K562 (cell line): ENCODE measurements at regions of chrX and their contacts with region 1.

Region 1: GRCh38 chrX:149539283-149540130 is 1.3 kb upstream of the EOLA1 start:
- DNase-seq: peak; percentile 77 to 93 (median 84)
- ATAC-seq: peak; percentile 85
- H3K4me3 ChIP-seq: peak overlapping the region; percentile 58
- H3K27ac ChIP-seq: no peak overlapping the region; the same call in 2 of the 3 replicates
- H3K4me1 ChIP-seq: peaks cover 8 to 16% of the 10 kb centered on the region in 2 experiments; a peak in 4 of 5 replicates
- H3K27me3 ChIP-seq: no peaks in the 10 kb centered on the region
- CTCF ChIP-seq: no peak
- EP300 ChIP-seq: no peak
- POLR2A ChIP-seq: no peak
- RAD21 ChIP-seq: no peak

Region 2: DNA sequence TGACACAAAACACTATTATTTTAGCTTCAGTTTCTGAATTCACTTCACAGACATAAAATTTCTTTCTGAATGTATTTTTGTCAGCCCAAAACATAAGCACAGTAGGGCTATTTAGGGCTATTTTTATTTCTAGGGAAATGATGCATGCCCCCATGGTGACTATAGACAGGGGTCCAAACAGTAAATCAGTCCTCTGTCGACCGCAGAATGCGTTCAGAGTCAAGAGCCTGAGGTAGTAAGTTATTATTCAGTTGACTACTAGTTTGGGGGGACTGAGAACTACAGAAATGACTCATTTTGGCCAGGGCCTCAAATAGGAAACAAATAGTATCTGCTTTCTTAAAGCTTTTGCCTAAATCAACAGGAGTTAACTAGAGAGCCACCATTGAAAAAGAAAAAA is 624.7 kb before region 1 on chrX:
- CTCF ChIA-PET with region 1: no interaction called
- POLR2A ChIA-PET with region 1: no interaction called
- in situ Hi-C with region 1: no loop called
- intact Hi-C with region 1: no loop called
- DNase-seq: no peak
- ATAC-seq: no peak
- H3K4me3 ChIP-seq: no peak overlapping the region
- H3K27ac ChIP-seq: no peak overlapping the region
- H3K4me1 ChIP-seq: no peaks in the 10 kb centered on the region
- H3K27me3 ChIP-seq: no peaks in the 10 kb centered on the region
- CTCF ChIP-seq: no peak
- EP300 ChIP-seq: no peak
- POLR2A ChIP-seq: no peak
- RAD21 ChIP-seq: no peak

Region 3: DNA sequence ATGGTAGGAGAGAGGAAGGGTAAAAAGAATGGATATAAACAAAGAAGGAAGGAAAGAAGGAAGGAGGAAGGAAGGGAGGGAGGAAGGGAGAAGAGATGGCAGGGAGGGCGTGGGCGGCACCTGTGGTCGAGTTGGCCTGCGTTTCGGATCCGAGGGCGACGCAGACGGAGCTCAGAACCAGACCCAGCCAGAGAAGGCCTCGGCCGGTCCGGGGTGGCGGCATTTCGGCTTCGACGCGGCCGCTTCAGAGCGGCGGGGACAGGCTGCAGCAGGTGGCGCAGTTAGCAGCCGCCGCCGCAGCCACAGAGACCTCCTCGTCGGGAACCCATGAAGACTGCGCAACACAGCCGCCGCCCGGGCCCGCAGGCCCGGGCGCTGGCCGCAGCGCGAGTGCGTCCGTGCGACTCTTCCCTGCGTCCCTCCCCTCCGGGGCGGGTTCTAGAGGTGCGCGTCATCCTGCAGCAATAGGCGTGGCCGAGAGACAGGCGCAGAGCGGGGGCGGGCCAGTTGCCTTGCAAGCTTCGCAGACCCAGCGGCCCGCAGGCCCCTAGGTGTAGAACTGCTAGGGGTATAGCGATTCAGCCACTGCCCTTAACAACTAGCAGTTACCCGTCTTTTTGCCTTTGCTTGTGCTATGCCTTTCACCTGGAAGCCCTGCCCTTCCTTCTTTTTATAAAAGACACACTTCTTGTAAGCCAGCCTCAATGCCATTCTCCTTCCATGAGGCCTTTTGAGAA is 34.4 kb before region 1 on chrX and contains the start of gene IDS:
- CTCF ChIA-PET with region 1: no interaction called
- POLR2A ChIA-PET with region 1: interaction called, 4 read pairs
- in situ Hi-C with region 1: no loop called
- intact Hi-C with region 1: loop called (anchors 5 kb)
- DNase-seq: peak; percentile 86 to 93 (median 88)
- ATAC-seq: peak; percentile 98
- H3K4me3 ChIP-seq: peak within 1 kb of the TSS; percentile 42
- H3K27ac ChIP-seq: peak within 1 kb of the TSS; percentile 59; the same call in 2 of the 3 replicates
- H3K4me1 ChIP-seq: peaks cover 11 to 14% of the 10 kb centered on the region in 2 experiments; a peak in 2 of 5 replicates
- H3K27me3 ChIP-seq: peaks cover 0 to 7% of the 10 kb centered on the region in 2 experiments; a peak in 3 of 5 replicates
- CTCF ChIP-seq: peak in 1 of 3 experiments; percentile 18; a peak in 1 of 6 replicates
- EP300 ChIP-seq: no peak
- POLR2A ChIP-seq: peak; percentile 73
- RAD21 ChIP-seq: no peak
- polyA plus RNA-seq, gene IDS: 2.0 to 2.2 TPM

Region 4: DNA sequence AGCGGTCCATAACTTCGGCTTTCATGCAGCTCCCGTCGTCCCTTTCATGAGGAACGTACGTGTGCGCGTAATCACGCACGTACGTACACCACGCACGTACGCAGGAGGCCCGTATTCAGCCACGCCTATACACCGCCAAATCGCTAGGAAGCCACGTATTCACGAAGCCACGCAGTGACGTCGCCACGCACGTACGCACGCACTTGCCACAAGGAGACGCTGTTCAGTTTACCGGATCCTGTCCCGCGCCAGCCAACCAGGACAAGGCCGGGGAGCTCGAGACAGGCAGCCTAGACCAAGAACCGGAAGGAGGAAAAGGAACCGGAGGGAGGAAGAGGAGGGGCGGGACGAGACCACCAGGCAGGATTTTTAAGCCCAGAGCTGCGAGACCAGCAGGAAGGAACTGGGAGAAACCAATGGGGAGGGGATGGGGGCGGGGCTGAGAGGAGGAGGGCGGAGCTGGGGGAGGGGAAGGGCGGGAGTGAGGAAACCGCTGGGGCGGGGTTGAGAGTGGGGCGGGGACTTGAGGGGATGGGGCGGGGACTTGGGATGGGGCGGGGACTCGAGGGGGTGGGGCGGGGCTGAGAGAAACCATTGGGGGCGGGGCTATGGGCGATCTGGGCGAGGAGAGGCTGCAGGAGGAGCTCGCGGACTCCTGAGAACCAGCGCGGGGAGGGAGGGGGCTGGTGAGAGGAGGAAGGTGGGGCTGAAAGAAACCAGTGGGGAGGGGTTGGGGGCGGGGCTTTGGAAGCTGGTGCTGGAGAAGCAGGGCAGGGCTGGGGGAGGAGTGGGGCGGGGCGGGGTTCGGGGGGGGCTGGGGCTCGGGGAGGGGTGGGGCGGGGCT is 399.1 kb after region 1 on chrX and contains the start of gene EOLA2:
- CTCF ChIA-PET with region 1: no interaction called
- POLR2A ChIA-PET with region 1: no interaction called
- in situ Hi-C with region 1: loop called (anchors 10 kb)
- intact Hi-C with region 1: no loop called
- DNase-seq: peak; percentile 63 to 97 (median 72)
- ATAC-seq: peak; percentile 79
- H3K4me3 ChIP-seq: peak within 1 kb of the TSS; percentile 95
- H3K27ac ChIP-seq: peak within 1 kb of the TSS; percentile 96
- H3K4me1 ChIP-seq: peaks cover 0 to 15% of the 10 kb centered on the region in 2 experiments; a peak in 2 of 5 replicates
- H3K27me3 ChIP-seq: no peaks in the 10 kb centered on the region
- CTCF ChIP-seq: peak; percentile 67 to 89 (median 85)
- EP300 ChIP-seq: no peak
- POLR2A ChIP-seq: peak; percentile 75
- RAD21 ChIP-seq: no peak
- polyA plus RNA-seq, gene EOLA2: 33.7 to 44.1 TPM